ENCODE measurements at regions of chr6 and their contacts with region 1.

Region 1: DNA sequence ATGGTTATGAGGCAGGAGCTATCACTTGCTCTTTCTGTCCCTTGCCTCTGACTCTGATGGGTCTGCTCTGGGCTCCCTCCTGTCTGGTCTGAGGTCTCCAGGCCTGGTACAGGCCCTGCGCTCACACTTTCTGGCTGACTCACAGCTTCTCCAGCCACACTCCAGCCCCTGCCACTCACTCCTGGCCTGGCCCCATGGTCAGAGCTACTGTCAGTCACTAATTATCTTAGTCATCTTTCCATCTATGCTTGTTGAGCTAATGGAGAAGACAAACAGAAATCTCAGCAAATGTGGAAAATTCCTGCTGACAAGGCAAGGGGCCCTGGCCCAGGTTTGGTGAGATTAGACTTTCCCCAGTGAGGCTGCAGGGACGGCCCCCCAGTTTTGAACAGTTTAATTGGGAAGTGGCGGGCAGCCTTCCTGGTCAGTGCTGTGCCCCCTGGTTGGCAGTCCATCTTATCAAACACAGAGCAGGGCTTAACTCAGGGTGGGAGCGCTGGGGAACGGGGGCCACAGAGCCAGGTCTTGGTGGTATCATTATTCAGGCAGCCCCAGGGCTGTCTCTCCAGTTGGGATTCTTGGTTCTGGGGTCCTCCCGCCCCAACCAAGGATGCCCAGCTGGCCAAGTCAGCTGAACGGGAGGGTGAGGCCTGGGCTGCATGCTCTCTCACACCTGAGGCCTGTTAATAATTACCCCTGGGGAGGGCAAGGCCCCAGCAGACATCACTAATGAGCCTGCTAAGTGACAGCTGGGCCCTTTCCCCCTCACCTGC is 63.4 kb downstream of the VEGFA start:
- DNase-seq: no peak
- H3K4me3 ChIP-seq: no peak overlapping the region
- H3K27ac ChIP-seq: no peak overlapping the region
- H3K4me1 ChIP-seq: peaks cover 5% of the 10 kb centered on the region
- H3K27me3 ChIP-seq: no peaks in the 10 kb centered on the region
- CTCF ChIP-seq: no peak

Region 2: DNA sequence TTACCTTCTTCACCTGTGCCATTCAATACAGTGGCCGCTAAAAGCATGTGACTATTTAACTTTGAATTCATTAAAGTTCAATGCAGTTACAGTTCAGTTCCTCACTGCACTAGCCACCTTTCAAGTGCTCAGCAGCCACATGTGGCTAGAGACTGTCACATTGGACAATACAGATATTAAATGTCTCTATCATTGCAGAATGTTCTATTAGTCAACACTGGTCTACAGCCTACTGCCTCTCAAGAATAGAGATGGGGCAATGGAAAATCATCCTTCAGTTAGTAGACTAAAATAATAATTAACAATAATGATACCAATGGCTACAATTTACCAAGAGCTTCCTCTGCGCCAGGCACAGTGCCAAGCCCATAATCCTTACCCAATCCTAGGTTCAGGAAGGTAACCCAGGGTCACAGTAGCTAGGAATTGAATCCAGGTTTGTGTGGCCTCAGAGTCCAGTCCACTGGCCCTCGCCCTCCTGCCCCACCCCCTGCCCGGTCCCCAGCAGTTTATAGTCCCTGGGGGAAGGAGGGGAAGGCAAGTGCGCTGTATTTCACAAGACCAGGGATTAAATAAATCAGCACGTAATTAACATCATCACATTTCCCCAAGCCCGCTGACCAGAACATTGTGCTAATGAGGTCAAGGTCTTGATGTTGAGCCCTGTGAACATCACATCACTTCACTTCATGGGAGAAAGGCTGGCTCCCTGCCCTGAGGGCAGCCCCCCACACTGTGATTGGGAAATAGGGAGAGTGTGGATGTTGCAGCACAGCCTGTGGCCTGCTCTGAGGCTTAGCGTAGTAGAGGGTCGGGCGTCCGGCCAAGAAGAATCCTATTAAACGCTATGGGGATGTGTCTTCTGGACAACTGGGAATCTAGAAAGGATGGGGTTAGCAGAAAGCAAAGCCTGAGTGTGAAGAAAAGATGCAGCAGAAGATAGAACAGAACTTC is 83.8 kb after region 1 on chr6:
- CTCF ChIA-PET with region 1: no interaction called
- dilution Hi-C with region 1: loop called (anchors 5 kb)
- in situ Hi-C with region 1: no loop called
- intact Hi-C with region 1: no loop called
- DNase-seq: no peak
- H3K4me3 ChIP-seq: no peak overlapping the region
- H3K27ac ChIP-seq: no peak overlapping the region
- H3K4me1 ChIP-seq: no peaks in the 10 kb centered on the region
- H3K27me3 ChIP-seq: no peaks in the 10 kb centered on the region
- CTCF ChIP-seq: no peak

Measured in mammary epithelial cell (primary cell).